Activated CD4-positive, alpha-beta memory T cell treated with anti-CD3 and anti-CD28 coated beads for 36 hours (primary cell): ENCODE measurements at regions of chr6 and their contacts with region 1.

Region 1: GRCh38 chr6:11277275-11278206 is 45.1 kb upstream of the NEDD9 start:
- DNase-seq: peak; percentile 72
- H3K4me3 Mint-ChIP-seq: peak overlapping the region; percentile 49
- H3K27ac Mint-ChIP-seq: peak overlapping the region; percentile 93
- H3K4me1 Mint-ChIP-seq: peaks cover 59% of the 10 kb centered on the region
- H3K27me3 Mint-ChIP-seq: no peaks in the 10 kb centered on the region

Region 2: GRCh38 chr6:10411971-10412745 is 865.4 kb before region 1 on chr6:
- CTCF ChIA-PET with region 1: no interaction called
- POLR2A ChIA-PET with region 1: no interaction called
- intact Hi-C with region 1: no loop called
- DNase-seq: peak; percentile 54
- H3K4me3 Mint-ChIP-seq: peak overlapping the region; percentile 80
- H3K27ac Mint-ChIP-seq: peak overlapping the region; percentile 52
- H3K4me1 Mint-ChIP-seq: peaks cover 33% of the 10 kb centered on the region
- H3K27me3 Mint-ChIP-seq: peaks cover 77% of the 10 kb centered on the region

Region 3: GRCh38 chr6:10478187-10479040 is 799.1 kb before region 1 on chr6:
- CTCF ChIA-PET with region 1: no interaction called
- POLR2A ChIA-PET with region 1: no interaction called
- intact Hi-C with region 1: no loop called
- DNase-seq: no peak
- H3K4me3 Mint-ChIP-seq: no peak overlapping the region
- H3K27ac Mint-ChIP-seq: no peak overlapping the region
- H3K4me1 Mint-ChIP-seq: no peaks in the 10 kb centered on the region
- H3K27me3 Mint-ChIP-seq: peaks cover 9% of the 10 kb centered on the region

Region 4: DNA sequence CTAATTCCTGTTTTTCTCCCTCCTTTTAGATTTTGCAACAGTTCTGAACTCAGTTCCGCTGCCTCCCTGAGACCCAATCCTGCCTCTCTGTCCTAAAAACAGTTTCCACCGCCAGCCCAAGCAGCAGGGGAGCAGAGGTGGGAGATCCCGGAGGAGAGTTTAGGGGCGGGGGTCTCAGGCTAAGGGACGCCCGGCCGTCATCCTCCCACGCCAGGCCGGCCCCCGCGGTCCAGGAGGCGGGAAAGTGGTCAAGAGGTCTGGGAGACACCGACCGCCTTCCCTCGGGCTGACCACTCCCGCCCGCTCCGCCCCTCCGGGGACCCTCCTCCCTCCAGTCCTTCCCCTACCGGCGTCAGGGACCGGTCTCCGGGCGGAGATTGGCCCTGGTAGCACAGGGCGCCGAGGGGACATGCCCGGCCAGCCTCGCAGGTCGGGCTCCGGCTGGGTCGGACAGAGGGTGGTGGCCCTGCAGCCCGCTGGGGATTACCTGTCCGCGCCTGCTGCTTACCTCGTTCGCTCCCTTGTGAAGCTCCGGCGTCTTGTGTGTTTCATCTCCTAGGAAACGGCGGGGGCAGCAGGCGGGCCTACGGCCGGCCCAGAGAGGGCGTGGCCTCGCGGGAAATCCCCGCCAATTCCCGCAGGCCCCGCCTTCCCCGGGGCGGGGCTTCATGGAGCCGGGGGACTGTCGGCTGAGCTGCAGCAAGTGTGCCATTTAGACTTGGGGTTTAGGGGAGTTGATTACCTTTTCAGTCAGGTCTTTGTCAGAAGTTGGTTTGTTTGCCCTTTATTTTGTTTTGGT is 439.3 kb before region 1 on chr6 and contains the start of gene MAK:
- CTCF ChIA-PET with region 1: no interaction called
- POLR2A ChIA-PET with region 1: no interaction called
- intact Hi-C with region 1: loop called (anchors 5 kb)
- DNase-seq: peak; percentile 91
- H3K4me3 Mint-ChIP-seq: peak within 1 kb of the TSS; percentile 73
- H3K27ac Mint-ChIP-seq: peak within 1 kb of the TSS; percentile 98
- H3K4me1 Mint-ChIP-seq: peaks cover 31% of the 10 kb centered on the region
- H3K27me3 Mint-ChIP-seq: peaks cover 40% of the 10 kb centered on the region
- total RNA-seq, gene MAK: 0.87 to 1.1 TPM

Region 5: GRCh38 chr6:11172501-11173332 is 104.8 kb before region 1 on chr6:
- CTCF ChIA-PET with region 1: interaction called, 3 read pairs
- POLR2A ChIA-PET with region 1: no interaction called
- intact Hi-C with region 1: loop called (anchors 5 kb)
- DNase-seq: peak; percentile 81
- H3K4me3 Mint-ChIP-seq: peak overlapping the region; percentile 16
- H3K27ac Mint-ChIP-seq: no peak overlapping the region
- H3K4me1 Mint-ChIP-seq: peaks cover 16% of the 10 kb centered on the region
- H3K27me3 Mint-ChIP-seq: no peaks in the 10 kb centered on the region

Region 6: GRCh38 chr6:11258260-11259237 is 19.0 kb before region 1 on chr6:
- CTCF ChIA-PET with region 1: interaction called, 3 read pairs
- POLR2A ChIA-PET with region 1: interaction called, 4 read pairs
- intact Hi-C with region 1: loop called (anchors 1 kb)
- DNase-seq: peak; percentile 48
- H3K4me3 Mint-ChIP-seq: peak overlapping the region; percentile 21
- H3K27ac Mint-ChIP-seq: peak overlapping the region; percentile 62
- H3K4me1 Mint-ChIP-seq: peaks cover 61% of the 10 kb centered on the region
- H3K27me3 Mint-ChIP-seq: no peaks in the 10 kb centered on the region

Region 7: GRCh38 chr6:11317885-11318771 is 40.6 kb after region 1 on chr6:
- CTCF ChIA-PET with region 1: no interaction called
- POLR2A ChIA-PET with region 1: interaction called, 6 read pairs
- intact Hi-C with region 1: loop called (anchors 1 kb)
- DNase-seq: peak; percentile 88
- H3K4me3 Mint-ChIP-seq: peak overlapping the region; percentile 14
- H3K27ac Mint-ChIP-seq: peak overlapping the region; percentile 92
- H3K4me1 Mint-ChIP-seq: peaks cover 63% of the 10 kb centered on the region
- H3K27me3 Mint-ChIP-seq: no peaks in the 10 kb centered on the region

Region 8: GRCh38 chr6:11353921-11354389 is 76.4 kb after region 1 on chr6:
- CTCF ChIA-PET with region 1: interaction called, 4 read pairs
- POLR2A ChIA-PET with region 1: interaction called, 8 read pairs
- intact Hi-C with region 1: loop called (anchors 2 kb)
- DNase-seq: peak; percentile 89
- H3K4me3 Mint-ChIP-seq: peak overlapping the region; percentile 43
- H3K27ac Mint-ChIP-seq: peak overlapping the region; percentile 93
- H3K4me1 Mint-ChIP-seq: peaks cover 79% of the 10 kb centered on the region
- H3K27me3 Mint-ChIP-seq: no peaks in the 10 kb centered on the region

Region 9: DNA sequence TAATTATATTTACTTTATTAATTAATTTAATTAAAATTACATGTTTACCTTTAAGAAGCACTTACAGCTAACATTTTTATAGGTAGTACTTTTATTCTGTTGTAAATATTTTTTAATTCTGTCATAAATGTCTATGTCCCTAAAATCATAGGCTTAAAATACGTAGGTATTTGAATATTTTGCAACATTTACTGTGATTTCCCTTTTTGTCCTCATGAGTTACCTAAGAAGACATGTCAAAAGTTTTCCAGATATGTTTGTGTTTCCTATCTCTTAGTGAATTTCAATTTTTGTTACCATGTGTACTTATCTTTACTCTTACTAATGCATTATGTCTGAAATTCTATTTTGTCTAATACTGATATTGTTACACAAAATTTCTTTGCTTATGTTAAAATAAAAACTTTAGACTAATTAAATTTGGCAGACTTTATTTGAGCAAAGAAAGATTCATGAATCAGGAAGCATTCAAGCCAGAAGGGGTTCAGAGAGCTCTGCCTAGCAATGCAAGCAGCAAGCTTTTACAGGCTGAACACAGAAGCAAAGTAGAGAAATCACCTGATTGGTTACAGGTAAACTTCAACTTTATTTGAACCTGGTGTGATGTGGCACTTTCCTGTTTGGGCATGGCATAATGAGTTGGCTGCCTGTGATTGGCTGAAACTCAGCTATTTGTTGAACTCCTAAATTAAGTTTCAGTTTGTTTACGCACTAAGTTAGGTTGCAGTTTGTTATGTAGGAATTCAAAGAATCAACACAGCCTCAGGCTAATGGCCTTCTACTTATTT is 136.8 kb after region 1 on chr6:
- CTCF ChIA-PET with region 1: interaction called, 3 read pairs
- POLR2A ChIA-PET with region 1: interaction called, 7 read pairs
- intact Hi-C with region 1: loop called (anchors 1 kb)
- DNase-seq: peak; percentile 63
- H3K4me3 Mint-ChIP-seq: no peak overlapping the region
- H3K27ac Mint-ChIP-seq: no peak overlapping the region
- H3K4me1 Mint-ChIP-seq: peaks cover 48% of the 10 kb centered on the region
- H3K27me3 Mint-ChIP-seq: no peaks in the 10 kb centered on the region